ENCODE measurements at regions of chr17 and their contacts with region 1.

Region 1: GRCh38 chr17:21126645-21127510 is at the start of gene DHRS7B:
- DNase-seq: peak; percentile 95
- H3K4me3 ChIP-seq: peak within 1 kb of the TSS; percentile 63 to 97 (median 71)
- H3K27ac ChIP-seq: peak within 1 kb of the TSS; percentile 71
- H3K4me1 ChIP-seq: peaks cover 12% of the 10 kb centered on the region
- H3K27me3 ChIP-seq: no peaks in the 10 kb centered on the region
- CTCF ChIP-seq: peak in 1 of 2 donors; percentile 14
- total RNA-seq, gene DHRS7B: 27.3 to 29.5 TPM

Region 2: GRCh38 chr17:21001813-21002221 is 125.1 kb before region 1 on chr17:
- CTCF ChIA-PET with region 1: no interaction called
- dilution Hi-C with region 1: no loop called
- in situ Hi-C with region 1: no loop called
- intact Hi-C with region 1: no loop called
- DNase-seq: no peak
- H3K4me3 ChIP-seq: no peak overlapping the region
- H3K27ac ChIP-seq: no peak overlapping the region
- H3K4me1 ChIP-seq: no peaks in the 10 kb centered on the region
- H3K27me3 ChIP-seq: no peaks in the 10 kb centered on the region
- CTCF ChIP-seq: no peak

Region 3: GRCh38 chr17:21089145-21089544 is 37.7 kb before region 1 on chr17:
- CTCF ChIA-PET with region 1: no interaction called
- dilution Hi-C with region 1: no loop called
- in situ Hi-C with region 1: no loop called
- intact Hi-C with region 1: no loop called
- DNase-seq: peak; percentile 49
- H3K4me3 ChIP-seq: no peak overlapping the region
- H3K27ac ChIP-seq: no peak overlapping the region
- H3K4me1 ChIP-seq: peaks cover 3% of the 10 kb centered on the region
- H3K27me3 ChIP-seq: no peaks in the 10 kb centered on the region
- CTCF ChIP-seq: no peak

Region 4: DNA sequence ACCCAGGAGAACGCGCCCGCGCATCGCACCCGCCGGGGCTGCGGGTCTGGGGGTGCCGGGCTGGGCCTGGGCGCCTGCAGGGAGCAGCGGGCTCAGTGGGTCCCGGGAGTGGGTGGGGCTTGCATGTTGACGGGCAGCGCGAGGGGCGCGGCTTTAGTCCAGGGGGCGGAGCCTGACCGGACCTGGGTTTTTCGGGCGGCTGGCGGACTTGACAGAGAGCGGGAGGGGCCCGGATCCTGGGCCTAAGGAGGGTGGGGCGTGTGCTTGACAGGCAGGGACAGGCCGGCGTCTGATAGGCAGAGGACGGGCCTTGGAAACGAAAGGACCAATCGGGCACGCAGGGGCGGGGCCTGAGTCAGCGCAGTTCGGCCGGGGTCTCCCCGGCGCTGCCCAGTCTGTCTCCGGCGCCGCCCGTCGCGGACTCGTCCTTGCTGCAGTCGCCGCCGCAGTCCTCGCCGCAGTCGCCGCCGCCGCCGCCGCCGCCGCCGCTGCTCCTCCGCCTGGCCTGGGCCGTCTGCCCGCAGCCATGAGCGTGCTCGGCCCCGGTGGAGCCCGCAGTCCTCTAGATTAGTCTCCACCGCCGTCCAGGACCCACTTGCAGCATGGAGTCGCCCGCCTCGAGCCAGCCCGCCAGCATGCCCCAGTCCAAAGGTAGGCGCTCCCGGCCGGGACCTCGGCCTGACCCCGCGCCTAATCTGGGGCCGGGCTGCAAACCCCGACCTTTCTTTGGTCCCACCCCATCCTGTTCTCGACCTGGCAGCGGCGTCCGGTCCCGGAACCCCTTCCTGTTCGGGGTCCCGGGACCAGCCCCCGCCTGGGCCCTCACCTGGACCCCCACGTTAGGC is 157.7 kb after region 1 on chr17 and contains the start of gene MAP2K3:
- CTCF ChIA-PET with region 1: no interaction called
- dilution Hi-C with region 1: no loop called
- in situ Hi-C with region 1: loop called in 1 of 2 experiments (anchors 10 kb)
- intact Hi-C with region 1: loop called (anchors 2 kb)
- DNase-seq: peak; percentile 97
- H3K4me3 ChIP-seq: peak within 1 kb of the TSS; percentile 71 to 87 (median 76)
- H3K27ac ChIP-seq: peak within 1 kb of the TSS; percentile 97
- H3K4me1 ChIP-seq: peaks cover 45% of the 10 kb centered on the region
- H3K27me3 ChIP-seq: no peaks in the 10 kb centered on the region
- CTCF ChIP-seq: no peak
- total RNA-seq, gene MAP2K3: 14.2 to 57.6 TPM

Region 5: DNA sequence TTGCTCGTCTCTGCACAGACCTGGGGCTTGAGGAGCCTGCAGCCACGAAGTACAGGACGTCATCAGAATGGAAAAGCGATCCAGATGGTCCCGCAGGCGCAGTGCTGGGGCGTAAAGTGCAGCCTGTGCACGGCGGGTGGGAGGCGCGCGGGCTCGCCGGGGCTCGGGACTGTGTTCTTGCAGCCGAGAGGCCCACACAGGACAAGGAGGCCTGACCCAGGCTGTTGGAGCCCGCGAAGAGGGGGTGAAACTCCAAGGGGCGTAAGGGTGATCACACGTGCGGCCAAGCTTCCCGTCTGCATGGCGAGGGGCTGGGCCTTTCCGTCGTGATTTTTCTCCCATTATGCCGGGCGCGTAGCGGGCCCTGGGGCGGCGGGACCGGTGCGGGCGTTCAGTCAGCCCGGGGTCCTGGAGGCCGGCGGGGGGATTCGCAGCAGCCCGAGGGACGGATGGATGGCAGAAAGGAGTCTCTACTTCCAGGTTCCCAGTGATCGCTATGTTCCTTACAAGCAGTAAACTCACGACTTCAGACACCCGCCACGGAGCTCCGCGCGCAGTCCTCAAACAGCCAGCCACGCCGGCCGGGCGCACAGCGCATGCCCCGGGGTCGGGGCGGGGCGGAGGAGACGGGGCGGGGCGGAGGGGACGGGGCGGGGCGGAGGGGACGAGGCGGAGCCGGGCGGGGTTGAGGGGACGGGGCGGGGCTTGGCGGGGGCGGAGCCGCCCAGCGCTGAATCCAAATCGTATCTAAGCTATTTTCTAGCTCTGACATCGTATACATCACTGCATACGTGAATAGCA is 424.4 kb after region 1 on chr17:
- CTCF ChIA-PET with region 1: no interaction called
- dilution Hi-C with region 1: no loop called
- in situ Hi-C with region 1: no loop called
- intact Hi-C with region 1: no loop called
- DNase-seq: peak; percentile 69
- H3K4me3 ChIP-seq: peak overlapping the region; percentile 70 to 100 (median 81)
- H3K27ac ChIP-seq: peak overlapping the region; percentile 51
- H3K4me1 ChIP-seq: peaks cover 12% of the 10 kb centered on the region
- H3K27me3 ChIP-seq: no peaks in the 10 kb centered on the region
- CTCF ChIP-seq: no peak

Measured in mammary epithelial cell (primary cell).